Gastrocnemius medialis (tissue), 4 donors: ENCODE measurements at regions of chr4 and their contacts with region 1.

Region 1: DNA sequence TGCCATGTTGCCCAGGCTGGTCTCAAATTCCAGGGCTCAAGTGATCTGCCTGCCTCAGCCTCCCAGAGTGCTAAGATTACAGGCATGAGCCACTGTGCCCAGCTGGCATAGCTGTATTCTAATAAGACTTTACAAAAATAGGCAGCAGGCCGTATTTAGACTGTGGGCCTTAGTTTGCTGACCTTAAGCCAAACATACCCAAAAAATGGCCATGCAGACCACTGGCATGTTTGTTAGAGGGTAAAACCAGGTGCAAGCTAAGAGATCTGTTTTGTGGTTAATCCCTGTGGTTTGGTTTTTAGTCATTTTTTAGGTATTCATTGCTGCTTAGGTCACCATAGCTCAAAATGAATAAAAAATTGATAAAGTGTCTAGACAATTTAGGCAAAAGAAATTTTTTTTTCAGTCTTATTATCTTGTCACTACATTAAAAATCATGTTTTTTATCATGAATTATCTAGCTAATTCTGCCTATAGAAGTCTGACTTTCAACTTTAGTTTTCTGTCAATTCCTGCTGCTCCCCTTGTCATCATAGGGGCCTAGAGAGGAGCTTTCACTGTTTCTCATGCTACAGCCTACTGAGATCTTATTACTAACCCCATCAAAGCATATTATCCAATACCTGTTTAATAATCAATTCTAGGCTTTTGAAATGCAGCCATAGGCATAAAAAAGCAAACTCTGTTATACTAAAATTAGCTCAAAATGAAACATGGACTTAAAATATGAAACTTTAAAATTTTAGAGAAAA is 7.5 kb upstream of the SPINK2 start:
- DNase-seq: peak; percentile 48
- ATAC-seq: peak; percentile 47 to 67
- H3K4me3 ChIP-seq: no peak overlapping the region
- H3K27ac ChIP-seq: peak overlapping the region; percentile 28 to 78 (median 49)
- H3K4me1 ChIP-seq: peaks cover 11 to 33% of the 10 kb centered on the region in 2 donors
- H3K27me3 ChIP-seq: no peaks in the 10 kb centered on the region
- CTCF ChIP-seq: no peak
- POLR2A ChIP-seq: no peak

Region 2: GRCh38 chr4:56200275-56200674 is 628.7 kb before region 1 on chr4:
- in situ Hi-C with region 1: no loop called
- intact Hi-C with region 1: no loop called
- DNase-seq: no peak
- ATAC-seq: no peak
- H3K4me3 ChIP-seq: no peak overlapping the region
- H3K27ac ChIP-seq: no peak overlapping the region
- H3K4me1 ChIP-seq: no peaks in the 10 kb centered on the region
- H3K27me3 ChIP-seq: no peaks in the 10 kb centered on the region
- CTCF ChIP-seq: no peak
- POLR2A ChIP-seq: no peak

Region 3: DNA sequence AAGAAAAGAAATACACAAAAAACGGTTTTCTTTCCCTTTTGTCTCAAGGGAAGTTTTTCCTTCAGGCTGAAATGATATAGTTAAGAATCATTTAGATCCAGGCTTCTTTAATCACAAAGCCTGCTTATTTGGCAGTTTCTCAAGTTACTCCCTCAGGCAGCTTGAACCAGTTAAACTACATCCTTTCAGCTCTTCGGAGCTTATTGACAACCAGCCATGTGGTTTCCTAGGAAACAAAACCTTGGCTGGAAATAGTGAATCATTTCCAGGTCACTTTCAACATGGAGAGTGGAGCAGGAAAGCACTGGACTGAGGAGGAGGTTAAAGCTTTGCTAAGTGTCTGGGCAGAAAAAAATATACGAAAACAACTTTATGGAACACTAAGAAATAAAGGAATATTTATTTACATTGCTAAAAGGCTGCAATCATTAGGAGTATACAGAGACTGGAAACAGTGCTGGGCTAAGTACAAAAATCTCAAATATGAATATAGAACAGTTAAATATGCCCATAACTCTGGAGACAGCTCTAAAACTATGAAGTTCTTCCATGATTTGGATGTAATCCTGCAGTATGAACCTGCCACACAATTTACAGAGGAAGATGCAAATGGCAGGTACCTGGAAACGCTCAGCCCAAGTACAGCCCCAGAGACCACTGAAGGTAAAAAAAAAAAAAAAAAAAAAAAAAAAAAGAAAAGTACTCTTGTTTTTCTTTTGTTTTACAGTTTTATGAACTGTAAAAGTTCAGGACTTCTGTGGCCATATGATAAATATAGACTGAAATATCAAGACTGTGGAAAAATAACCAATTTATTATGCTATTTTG is 418.5 kb before region 1 on chr4:
- in situ Hi-C with region 1: loop called in 2 of 4 experiments (anchors 25 kb)
- intact Hi-C with region 1: no loop called
- DNase-seq: peak in 1 of 2 donors; percentile 4
- ATAC-seq: peak; percentile 62 to 72
- H3K4me3 ChIP-seq: peak overlapping the region in 3 of 4 donors; percentile 1 to 22 (median 6)
- H3K27ac ChIP-seq: no peak overlapping the region
- H3K4me1 ChIP-seq: peaks cover 9 to 15% of the 10 kb centered on the region in 2 donors
- H3K27me3 ChIP-seq: no peaks in the 10 kb centered on the region
- CTCF ChIP-seq: no peak
- POLR2A ChIP-seq: no peak

Region 4: GRCh38 chr4:56424697-56425514 is 404.1 kb before region 1 on chr4:
- in situ Hi-C with region 1: loop called (anchors 10 to 25 kb)
- intact Hi-C with region 1: loop called (anchors 10 kb)
- DNase-seq: no peak
- ATAC-seq: peak in 1 of 2 donors; percentile 44
- H3K4me3 ChIP-seq: no peak overlapping the region
- H3K27ac ChIP-seq: no peak overlapping the region
- H3K4me1 ChIP-seq: peaks cover 0 to 8% of the 10 kb centered on the region in 2 donors
- H3K27me3 ChIP-seq: no peaks in the 10 kb centered on the region
- CTCF ChIP-seq: peak; percentile 41 to 70 (median 58)
- POLR2A ChIP-seq: no peak